Activated CD8-positive, alpha-beta memory T cell treated with anti-CD3 and anti-CD28 coated beads, Interleukin-2, amount 10 ng/mL, durations not matched to agents 7 days and 5 days (primary cell): ENCODE measurements at regions of chr10 and their contacts with region 1.

Region 1: GRCh38 chr10:80504158-80504811 is 33.4 kb upstream of the SH2D4B start:
- DNase-seq: no peak
- ATAC-seq: no peak
- H3K4me3 Mint-ChIP-seq: no peak overlapping the region
- H3K27ac Mint-ChIP-seq: peak overlapping the region; percentile 73
- H3K4me1 Mint-ChIP-seq: peaks cover 64% of the 10 kb centered on the region
- H3K27me3 Mint-ChIP-seq: no peaks in the 10 kb centered on the region

Region 2: DNA sequence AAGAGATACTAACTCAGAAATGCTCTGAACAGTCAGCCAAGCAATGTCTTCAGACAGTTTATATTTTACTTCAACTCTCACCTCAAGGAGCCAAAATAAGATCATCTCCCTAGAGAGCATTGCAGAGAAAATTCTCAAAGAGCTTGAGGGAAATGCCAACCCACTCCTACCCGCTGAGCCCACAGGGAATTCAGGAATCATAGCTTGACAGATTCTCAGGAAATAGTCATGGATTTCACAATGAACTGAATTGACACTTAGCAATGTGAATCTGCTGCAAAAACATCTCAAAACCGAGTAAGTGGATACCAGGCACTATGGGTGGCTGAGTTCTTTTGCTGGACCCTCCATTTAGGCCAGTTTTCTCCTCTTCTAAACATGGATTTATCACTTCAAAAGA is 381.5 kb before region 1 on chr10:
- CTCF ChIA-PET with region 1: no interaction called
- DNase-seq: no peak
- ATAC-seq: no peak
- H3K4me3 Mint-ChIP-seq: no peak overlapping the region
- H3K27ac Mint-ChIP-seq: no peak overlapping the region
- H3K4me1 Mint-ChIP-seq: no peaks in the 10 kb centered on the region
- H3K27me3 Mint-ChIP-seq: peaks cover 31% of the 10 kb centered on the region

Region 3: DNA sequence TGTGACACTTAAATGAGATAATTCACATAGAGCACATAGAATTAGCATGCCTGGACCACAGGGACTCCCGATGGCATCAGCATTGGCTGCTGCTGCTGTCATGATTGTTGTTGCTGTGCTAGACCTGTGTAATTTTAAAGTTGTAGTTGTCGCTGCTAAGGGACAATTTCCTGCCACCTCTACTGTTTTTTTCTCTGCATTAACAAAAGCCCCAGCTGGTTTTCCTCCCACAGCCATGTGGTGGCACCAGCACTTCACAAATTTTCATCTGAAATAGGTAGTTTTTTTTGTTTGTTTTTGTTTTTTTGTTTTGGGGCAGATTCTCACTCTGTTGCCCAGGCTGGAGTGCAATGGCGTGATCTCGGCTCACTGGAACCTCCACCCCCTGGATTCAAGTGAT is 121.3 kb before region 1 on chr10:
- CTCF ChIA-PET with region 1: interaction called, 36 read pairs
- DNase-seq: peak; percentile 72
- ATAC-seq: peak; percentile 59
- H3K4me3 Mint-ChIP-seq: no peak overlapping the region
- H3K27ac Mint-ChIP-seq: no peak overlapping the region
- H3K4me1 Mint-ChIP-seq: peaks cover 14% of the 10 kb centered on the region
- H3K27me3 Mint-ChIP-seq: peaks cover 13% of the 10 kb centered on the region

Region 4: DNA sequence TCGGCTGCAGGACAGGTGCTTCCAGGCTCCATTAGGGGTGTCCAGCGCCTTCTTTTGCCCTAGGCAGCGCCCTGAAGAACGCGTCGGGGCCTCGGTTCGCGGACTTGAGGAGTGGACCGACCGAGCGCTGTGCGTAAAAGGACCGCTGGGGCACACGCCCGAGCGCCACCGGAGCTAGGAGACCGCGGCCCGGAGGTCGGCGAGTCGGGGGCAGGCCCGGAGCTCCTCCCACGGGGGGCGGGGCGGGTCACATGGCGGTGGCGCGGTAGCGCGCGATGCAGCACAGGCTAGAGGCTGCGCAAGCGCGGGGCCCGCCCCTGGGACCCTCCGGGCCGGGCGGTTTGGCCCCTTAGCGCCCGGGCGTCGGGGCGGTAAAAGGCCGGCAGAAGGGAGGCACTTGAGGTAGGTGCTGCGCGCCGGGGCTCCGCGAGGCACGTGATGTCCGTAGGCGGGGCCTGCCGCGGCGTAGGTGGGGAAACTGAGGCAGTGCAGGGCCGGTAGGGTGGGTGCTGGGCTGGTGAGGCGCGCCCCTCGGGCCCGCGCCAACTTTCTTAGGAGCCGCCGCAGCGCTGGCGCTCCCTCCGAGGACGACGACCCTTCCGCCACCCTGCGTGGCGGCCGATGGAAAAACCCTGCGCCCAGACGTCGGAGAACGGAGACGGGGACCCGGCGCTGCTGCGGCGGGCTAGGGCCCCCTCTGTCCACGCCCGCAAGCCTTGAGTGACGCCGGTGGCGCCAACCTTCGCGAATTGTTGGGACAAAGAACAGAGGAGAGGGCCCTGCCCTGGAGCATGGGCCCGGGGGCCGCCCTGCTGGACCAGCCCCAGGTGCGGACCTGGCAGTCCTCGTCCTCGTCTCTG is 95.8 kb before region 1 on chr10 and contains the start of gene PRXL2A:
- CTCF ChIA-PET with region 1: interaction called, 15 read pairs
- DNase-seq: peak; percentile 87
- ATAC-seq: peak; percentile 99
- H3K4me3 Mint-ChIP-seq: peak within 1 kb of the TSS; percentile 69
- H3K27ac Mint-ChIP-seq: no peak within 1 kb of the TSS
- H3K4me1 Mint-ChIP-seq: peaks cover 11% of the 10 kb centered on the region
- H3K27me3 Mint-ChIP-seq: peaks cover 19% of the 10 kb centered on the region
- total RNA-seq, gene PRXL2A: 8.1 to 12.2 TPM

Region 5: DNA sequence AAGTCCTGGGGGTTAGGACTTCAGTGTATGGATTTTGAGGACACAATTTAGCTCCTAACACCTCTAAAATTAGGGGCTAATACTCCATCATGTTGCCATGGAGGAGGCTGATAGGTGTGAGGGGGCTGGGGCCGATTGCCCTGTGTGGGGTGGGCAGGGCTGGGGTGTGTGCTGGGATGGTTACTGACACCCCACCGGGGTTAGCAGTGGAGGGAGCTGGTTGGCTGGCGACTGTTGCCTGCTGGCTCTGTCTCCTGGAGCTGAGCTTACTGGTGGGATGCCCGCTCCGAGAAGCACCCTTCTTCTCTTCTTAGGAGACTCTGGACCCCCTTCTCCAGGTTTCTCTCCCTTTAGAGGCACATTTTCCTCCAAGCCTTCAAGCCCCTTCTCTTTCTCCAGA is 11.2 kb after region 1 on chr10:
- CTCF ChIA-PET with region 1: interaction called, 36 read pairs
- DNase-seq: no peak
- ATAC-seq: no peak
- H3K4me3 Mint-ChIP-seq: no peak overlapping the region
- H3K27ac Mint-ChIP-seq: no peak overlapping the region
- H3K4me1 Mint-ChIP-seq: peaks cover 39% of the 10 kb centered on the region
- H3K27me3 Mint-ChIP-seq: no peaks in the 10 kb centered on the region

Region 6: DNA sequence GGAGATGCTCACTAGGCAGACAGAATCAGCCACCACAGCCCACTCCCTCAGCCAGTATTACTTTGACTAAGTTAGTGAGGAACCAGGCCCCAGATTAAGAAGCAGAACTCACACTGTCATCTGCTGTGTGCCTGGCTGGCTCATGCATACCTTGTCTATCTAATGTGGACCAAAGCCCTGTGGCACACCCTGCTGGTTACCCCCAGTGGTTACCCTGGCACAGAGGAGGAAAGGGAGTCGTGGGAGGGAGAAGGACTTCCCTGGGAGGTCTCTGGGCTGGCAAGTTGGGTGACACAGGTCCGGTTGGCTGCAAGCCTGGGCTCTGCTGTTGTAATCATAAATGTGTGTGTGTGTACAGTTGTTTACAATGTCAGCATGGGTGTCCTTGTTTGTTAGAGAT is 26.0 kb after region 1 on chr10:
- CTCF ChIA-PET with region 1: interaction called, 45 read pairs
- DNase-seq: peak; percentile 75
- ATAC-seq: peak; percentile 72
- H3K4me3 Mint-ChIP-seq: peak overlapping the region; percentile 44
- H3K27ac Mint-ChIP-seq: peak overlapping the region; percentile 93
- H3K4me1 Mint-ChIP-seq: peaks cover 72% of the 10 kb centered on the region
- H3K27me3 Mint-ChIP-seq: no peaks in the 10 kb centered on the region

Region 7: GRCh38 chr10:80535671-80536365 is 31.5 kb after region 1 on chr10:
- CTCF ChIA-PET with region 1: interaction called, 45 read pairs
- DNase-seq: peak; percentile 87
- ATAC-seq: peak; percentile 90
- H3K4me3 Mint-ChIP-seq: peak overlapping the region; percentile 86
- H3K27ac Mint-ChIP-seq: peak overlapping the region; percentile 92
- H3K4me1 Mint-ChIP-seq: peaks cover 39% of the 10 kb centered on the region
- H3K27me3 Mint-ChIP-seq: no peaks in the 10 kb centered on the region